CD4-positive, alpha-beta T cell (primary cell): ENCODE measurements at regions of chr3 and their contacts with region 1.

Region 1: DNA sequence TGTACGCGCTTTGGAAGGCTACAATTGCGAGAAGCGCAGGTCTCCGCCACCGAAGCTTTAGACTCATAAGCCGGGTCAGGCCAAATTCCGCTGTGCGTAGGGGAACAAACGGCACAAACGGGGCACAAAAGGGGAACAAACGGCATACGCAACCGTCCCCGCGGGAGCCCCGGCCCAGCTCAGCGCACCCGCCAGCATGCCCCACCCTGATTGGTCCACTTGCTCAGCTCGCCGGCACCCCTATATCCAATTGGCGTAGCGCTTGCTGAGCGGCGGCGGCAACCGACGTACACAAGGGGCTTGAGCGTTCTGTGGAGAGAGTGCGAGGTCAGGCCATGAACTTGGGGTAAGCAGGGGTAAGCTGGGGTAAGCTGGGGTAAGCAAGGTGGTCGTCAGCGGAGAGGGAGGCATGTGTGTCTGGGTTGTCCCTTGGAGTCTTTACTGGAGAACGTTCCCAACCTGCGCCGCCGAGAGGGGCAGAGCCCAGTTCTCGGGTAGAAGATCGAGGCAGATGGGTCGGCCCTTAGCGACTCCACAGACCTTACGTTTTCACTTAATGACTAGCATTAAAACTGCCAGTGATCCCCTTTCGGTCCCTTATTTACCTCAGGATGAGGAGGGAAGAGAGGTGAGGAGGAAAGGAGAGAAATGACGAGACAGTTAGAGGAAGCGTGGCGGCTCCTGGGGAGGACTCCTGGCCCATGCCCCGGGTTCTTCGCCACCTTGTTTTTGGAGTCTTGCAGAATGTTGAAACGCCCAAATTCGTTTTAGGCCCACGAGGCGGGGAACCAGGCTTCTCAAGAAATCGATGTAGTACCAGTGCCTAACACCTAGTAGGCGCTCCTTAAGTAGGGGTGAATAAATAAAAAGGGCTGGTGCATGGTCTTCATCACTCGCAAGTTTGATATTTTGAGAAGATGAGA is at the start of gene CCDC66:
- DNase-seq: peak; percentile 89 to 97 (median 93)
- ATAC-seq: peak; percentile 87
- H3K4me3 ChIP-seq: peak within 1 kb of the TSS; percentile 69
- H3K4me3 Mint-ChIP-seq: peak within 1 kb of the TSS; percentile 99
- H3K27ac ChIP-seq: peak within 1 kb of the TSS; percentile 85 to 94
- H3K27ac Mint-ChIP-seq: peak within 1 kb of the TSS; percentile 97
- H3K4me1 ChIP-seq: peaks cover 6% of the 10 kb centered on the region
- H3K4me1 Mint-ChIP-seq: peaks cover 31% of the 10 kb centered on the region
- H3K27me3 ChIP-seq: no peaks in the 10 kb centered on the region
- H3K27me3 Mint-ChIP-seq: no peaks in the 10 kb centered on the region
- CTCF ChIP-seq: peak; percentile 67
- total RNA-seq, gene CCDC66: 97.1 to 101 TPM

Region 2: DNA sequence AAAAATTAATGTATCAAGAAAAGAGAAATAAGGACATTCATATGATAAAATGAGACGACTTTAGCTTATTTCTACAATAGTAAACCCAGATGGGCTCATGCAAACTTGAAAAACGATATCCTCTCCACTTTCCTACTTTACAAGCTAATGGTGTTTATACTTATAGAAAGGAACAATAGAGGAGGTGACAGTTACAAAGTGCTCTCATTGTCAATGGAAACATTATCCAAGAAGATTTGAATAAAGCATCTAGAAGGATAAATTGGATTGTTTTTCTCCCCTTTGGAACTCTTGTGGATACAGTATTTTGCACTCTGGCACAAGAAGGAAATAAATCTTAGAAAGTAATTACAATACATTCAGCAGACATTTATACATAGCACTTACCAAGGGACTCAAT is 20.4 kb before region 1 on chr3:
- CTCF ChIA-PET with region 1: no interaction called
- POLR2A ChIA-PET with region 1: no interaction called
- intact Hi-C with region 1: no loop called
- DNase-seq: no peak
- ATAC-seq: no peak
- H3K4me3 ChIP-seq: no peak overlapping the region
- H3K4me3 Mint-ChIP-seq: no peak overlapping the region
- H3K27ac ChIP-seq: no peak overlapping the region
- H3K27ac Mint-ChIP-seq: no peak overlapping the region
- H3K4me1 ChIP-seq: no peaks in the 10 kb centered on the region
- H3K4me1 Mint-ChIP-seq: no peaks in the 10 kb centered on the region
- H3K27me3 ChIP-seq: no peaks in the 10 kb centered on the region
- H3K27me3 Mint-ChIP-seq: peaks cover 8% of the 10 kb centered on the region
- CTCF ChIP-seq: no peak

Region 3: GRCh38 chr3:56593455-56594158 is 36.4 kb after region 1 on chr3:
- CTCF ChIA-PET with region 1: interaction called, 5 read pairs
- POLR2A ChIA-PET with region 1: interaction called, 74 read pairs
- intact Hi-C with region 1: loop called in 1 of 2 experiments (anchors 1 kb)
- DNase-seq: peak; percentile 38 to 90 (median 51)
- ATAC-seq: peak; percentile 99
- H3K4me3 ChIP-seq: peak overlapping the region; percentile 30
- H3K4me3 Mint-ChIP-seq: peak overlapping the region; percentile 75
- H3K27ac ChIP-seq: peak overlapping the region; percentile 39 to 60
- H3K27ac Mint-ChIP-seq: peak overlapping the region; percentile 95
- H3K4me1 ChIP-seq: peaks cover 26% of the 10 kb centered on the region
- H3K4me1 Mint-ChIP-seq: peaks cover 82% of the 10 kb centered on the region
- H3K27me3 ChIP-seq: no peaks in the 10 kb centered on the region
- H3K27me3 Mint-ChIP-seq: no peaks in the 10 kb centered on the region
- CTCF ChIP-seq: no peak

Region 4: GRCh38 chr3:56610669-56611335 is 53.6 kb after region 1 on chr3:
- CTCF ChIA-PET with region 1: interaction called, 3 read pairs
- POLR2A ChIA-PET with region 1: interaction called, 20 read pairs
- intact Hi-C with region 1: loop called in 1 of 2 experiments (anchors 5 kb)
- DNase-seq: peak in 1 of 14 experiments; percentile 13
- ATAC-seq: no peak
- H3K4me3 ChIP-seq: no peak overlapping the region
- H3K4me3 Mint-ChIP-seq: peak overlapping the region; percentile 18
- H3K27ac ChIP-seq: no peak overlapping the region
- H3K27ac Mint-ChIP-seq: peak overlapping the region; percentile 63
- H3K4me1 ChIP-seq: peaks cover 31% of the 10 kb centered on the region
- H3K4me1 Mint-ChIP-seq: peaks cover 73% of the 10 kb centered on the region
- H3K27me3 ChIP-seq: no peaks in the 10 kb centered on the region
- H3K27me3 Mint-ChIP-seq: no peaks in the 10 kb centered on the region
- CTCF ChIP-seq: no peak

Region 5: DNA sequence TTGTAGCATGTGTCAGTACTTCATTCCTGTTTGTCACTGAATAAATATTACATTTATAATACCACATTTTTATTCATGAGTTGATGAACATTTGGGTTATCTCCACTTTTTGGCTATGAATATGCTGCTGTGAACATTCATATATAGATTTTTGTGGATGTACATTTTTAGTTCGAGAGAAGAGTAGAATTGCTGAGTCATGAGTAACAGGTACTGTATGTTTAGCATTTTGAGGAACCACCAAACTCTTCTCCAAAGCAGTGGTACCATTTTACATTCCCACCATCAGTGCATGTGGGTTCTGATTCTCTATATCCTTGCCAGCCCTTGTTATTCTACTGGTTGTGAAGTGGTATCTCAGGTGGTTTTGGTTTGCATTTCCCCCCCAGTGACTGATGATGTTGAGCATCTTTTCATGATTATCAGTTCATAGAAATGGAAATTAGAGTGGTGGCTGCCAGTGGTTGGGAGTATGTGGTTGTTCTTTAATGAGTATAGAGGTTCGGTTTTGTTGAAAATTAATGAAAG is 59.4 kb after region 1 on chr3:
- CTCF ChIA-PET with region 1: interaction called, 3 read pairs
- POLR2A ChIA-PET with region 1: interaction called, 20 read pairs
- intact Hi-C with region 1: loop called in 1 of 2 experiments (anchors 5 kb)
- DNase-seq: peak in 1 of 14 experiments; percentile 18
- ATAC-seq: no peak
- H3K4me3 ChIP-seq: no peak overlapping the region
- H3K4me3 Mint-ChIP-seq: no peak overlapping the region
- H3K27ac ChIP-seq: no peak overlapping the region
- H3K27ac Mint-ChIP-seq: peak overlapping the region; percentile 70
- H3K4me1 ChIP-seq: peaks cover 16% of the 10 kb centered on the region
- H3K4me1 Mint-ChIP-seq: peaks cover 31% of the 10 kb centered on the region
- H3K27me3 ChIP-seq: no peaks in the 10 kb centered on the region
- H3K27me3 Mint-ChIP-seq: no peaks in the 10 kb centered on the region
- CTCF ChIP-seq: no peak

Region 6: DNA sequence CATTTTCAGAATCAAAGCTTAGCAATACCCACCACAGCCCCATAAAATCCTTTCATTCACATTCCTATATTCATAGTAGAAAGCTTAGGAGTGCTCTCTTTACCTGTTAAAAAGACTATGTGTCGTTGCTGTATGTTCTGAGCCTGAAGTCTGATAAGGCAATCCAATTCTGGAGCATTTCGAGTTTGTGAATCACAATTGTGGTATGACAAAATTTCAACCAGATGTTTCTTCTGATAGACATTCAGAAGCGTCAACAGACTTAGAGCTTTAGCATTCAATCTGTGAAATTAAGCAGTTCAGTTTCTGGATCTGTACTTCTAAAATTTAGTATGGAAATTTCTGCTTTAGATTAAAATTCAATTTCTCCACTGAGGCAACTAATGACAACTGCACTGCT is 67.6 kb after region 1 on chr3:
- CTCF ChIA-PET with region 1: interaction called, 3 read pairs
- POLR2A ChIA-PET with region 1: interaction called, 22 read pairs
- intact Hi-C with region 1: loop called in 1 of 2 experiments (anchors 5 kb)
- DNase-seq: no peak
- ATAC-seq: no peak
- H3K4me3 ChIP-seq: no peak overlapping the region
- H3K4me3 Mint-ChIP-seq: no peak overlapping the region
- H3K27ac ChIP-seq: no peak overlapping the region
- H3K27ac Mint-ChIP-seq: peak overlapping the region; percentile 34
- H3K4me1 ChIP-seq: no peaks in the 10 kb centered on the region
- H3K4me1 Mint-ChIP-seq: peaks cover 23% of the 10 kb centered on the region
- H3K27me3 ChIP-seq: no peaks in the 10 kb centered on the region
- H3K27me3 Mint-ChIP-seq: no peaks in the 10 kb centered on the region
- CTCF ChIP-seq: no peak

Region 7: GRCh38 chr3:56783644-56784447 is 226.7 kb after region 1 on chr3:
- CTCF ChIA-PET with region 1: no interaction called
- POLR2A ChIA-PET with region 1: interaction called, 3 read pairs
- intact Hi-C with region 1: loop called in 1 of 2 experiments (anchors 10 kb)
- DNase-seq: peak; percentile 40 to 92 (median 66)
- ATAC-seq: peak; percentile 83
- H3K4me3 ChIP-seq: peak overlapping the region; percentile 28
- H3K4me3 Mint-ChIP-seq: peak overlapping the region; percentile 60
- H3K27ac ChIP-seq: peak overlapping the region; percentile 82 to 87
- H3K27ac Mint-ChIP-seq: peak overlapping the region; percentile 88
- H3K4me1 ChIP-seq: peaks cover 91% of the 10 kb centered on the region
- H3K4me1 Mint-ChIP-seq: peaks cover 99% of the 10 kb centered on the region
- H3K27me3 ChIP-seq: no peaks in the 10 kb centered on the region
- H3K27me3 Mint-ChIP-seq: no peaks in the 10 kb centered on the region
- CTCF ChIP-seq: no peak

Region 8: DNA sequence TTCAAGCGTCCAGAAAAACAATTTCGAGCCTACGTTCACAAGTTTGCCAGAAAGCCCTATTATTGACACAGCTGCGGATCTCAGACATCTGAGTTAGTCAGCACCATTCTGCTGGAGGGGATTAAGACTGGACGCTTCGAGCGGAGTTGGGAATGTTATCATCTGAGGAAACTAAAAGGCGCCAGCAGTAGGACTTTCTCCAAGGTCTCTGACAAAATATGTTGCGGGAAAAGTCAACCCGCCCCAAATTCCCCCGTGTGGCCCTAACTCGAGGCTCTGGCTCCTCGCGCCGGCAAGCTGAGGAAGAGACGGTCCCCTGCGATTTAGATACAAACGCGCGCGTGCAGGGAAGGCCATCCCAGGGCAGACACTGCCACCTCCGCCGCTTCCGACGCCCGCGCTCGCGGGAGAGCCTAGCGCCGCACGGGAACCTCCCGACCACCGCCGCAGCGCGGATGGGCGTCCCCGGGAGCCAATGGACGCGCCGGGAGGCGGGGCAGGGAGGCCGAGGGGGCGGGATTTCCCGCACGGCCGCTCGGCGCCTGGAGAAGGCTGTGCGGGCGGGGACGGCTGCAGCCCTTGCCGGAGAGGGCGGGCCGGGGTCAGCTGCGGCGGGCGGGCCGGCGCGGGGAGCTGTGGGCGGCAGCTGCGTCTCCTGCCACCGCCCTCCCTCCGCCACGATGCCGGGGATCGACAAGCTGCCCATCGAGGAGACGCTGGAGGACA is 670.2 kb after region 1 on chr3 and contains the start of gene APPL1:
- CTCF ChIA-PET with region 1: no interaction called
- POLR2A ChIA-PET with region 1: no interaction called
- intact Hi-C with region 1: loop called in 1 of 2 experiments (anchors 5 kb)
- DNase-seq: peak; percentile 61 to 93 (median 84)
- ATAC-seq: peak; percentile 88
- H3K4me3 ChIP-seq: peak within 1 kb of the TSS; percentile 80
- H3K4me3 Mint-ChIP-seq: peak within 1 kb of the TSS; percentile 95
- H3K27ac ChIP-seq: no peak within 1 kb of the TSS
- H3K27ac Mint-ChIP-seq: peak within 1 kb of the TSS; percentile 82
- H3K4me1 ChIP-seq: peaks cover 10% of the 10 kb centered on the region
- H3K4me1 Mint-ChIP-seq: peaks cover 33% of the 10 kb centered on the region
- H3K27me3 ChIP-seq: no peaks in the 10 kb centered on the region
- H3K27me3 Mint-ChIP-seq: no peaks in the 10 kb centered on the region
- CTCF ChIP-seq: no peak
- total RNA-seq, gene APPL1: 21.3 to 22.9 TPM